Ovary (tissue), 10 donors: ENCODE measurements at regions of chr20 and their contacts with region 1.

Region 1: GRCh38 chr20:1212607-1213396 is 9.5 kb downstream of the C20orf202 start:
- DNase-seq: peak; percentile 39 to 63 (median 46)
- H3K4me3 ChIP-seq: no peak overlapping the region
- H3K27ac ChIP-seq: no peak overlapping the region
- H3K4me1 ChIP-seq: no peaks in the 10 kb centered on the region
- H3K27me3 ChIP-seq: no peaks in the 10 kb centered on the region
- CTCF ChIP-seq: peak; percentile 40 to 59 (median 49)
- EP300 ChIP-seq: no peak
- POLR2A ChIP-seq: no peak

Region 2: DNA sequence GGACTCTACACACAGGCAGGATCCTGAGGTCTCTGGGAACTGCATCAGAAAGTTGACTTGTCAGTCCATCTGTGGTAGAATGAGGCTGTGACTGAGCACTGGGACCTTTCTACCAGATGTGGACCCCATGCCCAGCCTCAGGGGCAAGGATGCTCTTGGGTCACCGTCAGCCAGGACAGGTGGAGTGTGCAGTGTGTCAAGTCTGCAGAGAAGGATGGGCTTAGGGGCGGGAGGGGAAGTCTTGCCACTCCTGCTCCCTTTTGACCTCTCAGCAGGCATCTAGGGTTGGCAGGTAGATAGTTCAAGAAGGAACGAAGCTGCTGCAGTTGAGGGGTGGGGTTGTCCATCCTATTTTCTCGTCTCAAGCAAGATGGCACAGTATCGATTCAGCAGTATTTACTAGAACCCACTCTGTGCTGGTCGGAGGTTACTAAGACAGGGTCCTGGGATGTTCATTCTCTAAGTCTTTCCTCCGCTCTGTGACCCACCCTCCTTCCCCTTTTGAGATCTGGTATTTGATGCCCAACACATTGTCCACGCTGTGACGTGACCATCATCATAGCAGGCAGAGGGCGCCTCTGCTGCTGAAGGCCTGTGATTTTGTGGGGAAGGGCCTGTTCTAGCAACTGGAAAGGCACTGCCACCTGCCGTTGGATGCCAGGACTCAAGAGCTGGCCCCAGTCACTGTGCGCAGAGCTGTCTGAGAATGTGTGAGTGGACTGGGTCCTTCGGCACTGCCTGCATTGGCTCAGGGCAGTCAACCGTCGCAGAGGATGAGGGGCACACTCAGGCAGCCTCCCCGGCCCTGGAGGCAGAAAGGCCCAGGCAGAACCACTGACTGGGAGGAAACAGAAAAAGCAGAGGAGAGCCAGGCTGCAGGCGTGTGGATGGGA is 781.5 kb before region 1 on chr20:
- intact Hi-C with region 1: no loop called
- DNase-seq: peak in 1 of 5 donors; percentile 55
- H3K4me3 ChIP-seq: no peak overlapping the region
- H3K27ac ChIP-seq: no peak overlapping the region
- H3K4me1 ChIP-seq: no peaks in the 10 kb centered on the region
- H3K27me3 ChIP-seq: no peaks in the 10 kb centered on the region
- CTCF ChIP-seq: no peak
- EP300 ChIP-seq: no peak
- POLR2A ChIP-seq: no peak

Region 3: GRCh38 chr20:815914-816606 is 396.7 kb before region 1 on chr20:
- intact Hi-C with region 1: loop called in 3 of 4 experiments (anchors 5 to 10 kb)
- DNase-seq: peak; percentile 29 to 70 (median 59)
- H3K4me3 ChIP-seq: no peak overlapping the region
- H3K27ac ChIP-seq: no peak overlapping the region
- H3K4me1 ChIP-seq: no peaks in the 10 kb centered on the region
- H3K27me3 ChIP-seq: no peaks in the 10 kb centered on the region
- CTCF ChIP-seq: peak; percentile 77 to 91 (median 85)
- EP300 ChIP-seq: no peak
- POLR2A ChIP-seq: no peak

Region 4: DNA sequence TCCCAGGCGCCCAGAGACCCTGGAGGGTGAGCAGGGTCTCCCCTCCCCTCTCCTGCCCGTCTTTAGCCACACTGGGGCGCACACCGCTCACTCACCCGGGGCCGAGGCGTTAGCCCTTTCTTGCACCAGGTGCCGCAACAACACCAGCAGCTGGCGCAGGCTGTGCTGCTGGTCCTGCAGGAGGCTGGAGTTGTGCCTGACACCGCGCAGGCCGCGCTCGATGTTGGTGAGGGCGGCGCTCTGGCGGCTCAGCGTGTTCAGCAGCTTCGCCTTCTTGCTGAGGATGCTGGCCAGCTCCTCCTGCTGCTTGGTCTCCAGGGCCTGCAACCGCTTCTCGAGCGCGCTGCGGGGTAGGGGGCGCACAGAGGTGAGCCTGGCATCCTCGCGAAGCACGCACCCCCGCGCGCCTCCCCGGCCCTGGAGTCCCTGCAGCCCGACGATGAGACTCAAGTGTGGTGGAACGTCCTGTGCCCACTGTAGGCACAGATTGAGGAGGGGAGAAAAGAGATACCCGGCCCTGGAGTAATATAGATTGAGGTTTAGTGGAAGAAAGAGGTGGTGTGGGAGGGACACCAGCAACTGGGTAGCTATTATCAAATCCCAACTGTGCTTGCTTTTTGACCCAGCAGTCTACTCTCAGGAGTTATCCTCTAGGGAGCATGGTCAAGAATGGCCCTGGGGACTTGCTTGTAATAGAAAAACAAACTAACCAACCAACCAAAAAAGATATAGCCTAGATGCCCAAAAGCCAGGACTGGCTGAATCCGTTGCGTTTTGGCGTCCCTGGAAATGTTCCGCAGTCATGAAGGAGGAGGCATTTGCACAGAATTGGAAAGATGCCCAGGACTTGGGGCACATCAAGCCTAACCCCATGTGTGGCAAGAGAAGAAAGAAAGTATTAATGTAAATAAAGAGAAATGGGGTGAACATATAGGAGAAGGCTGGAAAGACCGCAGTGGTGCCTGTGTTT is 327.5 kb before region 1 on chr20:
- intact Hi-C with region 1: loop called in 1 of 4 experiments (anchors 10 kb)
- DNase-seq: peak; percentile 60 to 90 (median 79)
- H3K4me3 ChIP-seq: no peak overlapping the region
- H3K27ac ChIP-seq: no peak overlapping the region
- H3K4me1 ChIP-seq: peaks cover 7% of the 10 kb centered on the region
- H3K27me3 ChIP-seq: no peaks in the 10 kb centered on the region
- CTCF ChIP-seq: peak in 2 of 3 donors; percentile 49 to 69
- EP300 ChIP-seq: no peak
- POLR2A ChIP-seq: no peak

Region 5: DNA sequence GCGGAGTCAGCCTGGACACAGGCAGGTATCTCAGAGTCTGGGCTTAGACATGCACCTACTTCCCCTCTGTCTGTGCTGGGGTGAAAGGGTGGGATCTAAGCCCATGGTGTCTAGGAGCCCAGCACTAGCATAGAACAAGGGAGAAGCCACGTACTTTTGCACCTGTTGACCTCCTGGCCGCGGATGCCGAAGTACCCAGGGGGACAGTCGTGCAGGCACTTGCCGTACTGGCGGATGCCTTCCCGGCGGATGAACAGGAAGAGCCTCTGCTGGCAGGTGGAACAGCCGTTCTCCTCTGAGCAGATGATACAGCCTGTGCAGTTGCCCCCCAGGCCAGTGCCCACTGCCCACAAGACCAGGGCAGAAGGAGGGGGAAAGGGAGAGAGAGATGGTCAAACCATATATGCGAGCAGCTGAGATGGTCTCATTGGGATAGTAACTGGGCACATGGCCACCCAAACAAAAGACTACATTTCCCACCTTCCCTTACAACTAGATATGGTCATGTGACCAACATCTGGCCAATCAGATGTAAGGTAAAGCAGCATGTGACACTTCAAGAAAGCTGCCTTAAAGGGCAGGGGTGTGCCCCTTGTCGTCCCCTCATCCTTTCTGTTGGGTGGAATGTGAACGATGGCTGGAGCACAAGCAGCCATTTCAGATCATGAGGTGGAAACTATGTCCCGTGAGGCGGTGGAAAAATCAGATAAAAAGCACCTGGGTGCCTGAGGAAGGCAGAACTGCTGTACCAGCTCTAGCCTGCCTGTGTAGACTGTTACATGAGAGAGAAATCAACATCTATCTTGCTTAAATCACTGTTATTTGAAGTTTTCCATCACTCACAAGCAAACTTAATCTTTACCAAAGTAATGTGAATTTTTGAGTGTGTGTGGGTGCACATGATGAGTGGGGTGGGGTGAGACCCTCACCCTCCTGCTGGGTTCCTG is 244.7 kb before region 1 on chr20:
- intact Hi-C with region 1: loop called in 1 of 4 experiments (anchors 10 kb)
- DNase-seq: no peak
- H3K4me3 ChIP-seq: no peak overlapping the region
- H3K27ac ChIP-seq: no peak overlapping the region
- H3K4me1 ChIP-seq: no peaks in the 10 kb centered on the region
- H3K27me3 ChIP-seq: no peaks in the 10 kb centered on the region
- CTCF ChIP-seq: no peak
- EP300 ChIP-seq: no peak
- POLR2A ChIP-seq: no peak

Region 6: GRCh38 chr20:1118336-1119127 is 94.3 kb before region 1 on chr20 and contains the start of gene PSMF1:
- intact Hi-C with region 1: loop called in 1 of 4 experiments (anchors 10 kb)
- DNase-seq: peak; percentile 87 to 95 (median 92)
- H3K4me3 ChIP-seq: peak within 1 kb of the TSS; percentile 90
- H3K27ac ChIP-seq: peak within 1 kb of the TSS; percentile 1 to 38
- H3K4me1 ChIP-seq: peaks cover 23% of the 10 kb centered on the region
- H3K27me3 ChIP-seq: no peaks in the 10 kb centered on the region
- CTCF ChIP-seq: peak in 1 of 3 donors; percentile 26
- EP300 ChIP-seq: no peak
- POLR2A ChIP-seq: no peak
- total RNA-seq, gene PSMF1: 33.4 to 163 (median 127) TPM

Region 7: DNA sequence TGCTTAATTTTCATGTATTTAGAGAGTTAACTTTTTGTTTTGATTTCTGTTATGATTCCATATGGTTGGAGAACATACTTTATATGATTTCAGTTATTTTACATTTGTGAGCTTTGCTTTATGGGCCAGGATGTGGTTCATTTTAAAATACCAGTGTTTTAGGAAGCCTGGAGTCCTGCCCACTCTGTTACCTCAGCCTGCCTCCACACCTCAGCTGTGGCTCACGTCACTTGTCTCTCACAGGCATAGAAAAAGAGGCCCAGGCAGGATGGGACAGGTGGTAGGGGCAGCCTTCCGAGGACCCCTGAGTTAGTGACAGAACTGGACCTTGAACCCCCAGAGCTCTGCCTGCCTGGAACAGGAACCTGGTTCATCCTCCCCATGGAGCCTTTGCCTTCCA is 78.4 kb before region 1 on chr20:
- intact Hi-C with region 1: no loop called
- DNase-seq: no peak
- H3K4me3 ChIP-seq: no peak overlapping the region
- H3K27ac ChIP-seq: no peak overlapping the region
- H3K4me1 ChIP-seq: no peaks in the 10 kb centered on the region
- H3K27me3 ChIP-seq: no peaks in the 10 kb centered on the region
- CTCF ChIP-seq: no peak
- EP300 ChIP-seq: no peak
- POLR2A ChIP-seq: no peak

Region 8: GRCh38 chr20:1336699-1337367 is 124.0 kb after region 1 on chr20:
- intact Hi-C with region 1: no loop called
- DNase-seq: peak; percentile 63 to 84 (median 72)
- H3K4me3 ChIP-seq: no peak overlapping the region
- H3K27ac ChIP-seq: no peak overlapping the region
- H3K4me1 ChIP-seq: peaks cover 2% of the 10 kb centered on the region
- H3K27me3 ChIP-seq: no peaks in the 10 kb centered on the region
- CTCF ChIP-seq: no peak
- EP300 ChIP-seq: no peak
- POLR2A ChIP-seq: no peak

Region 9: DNA sequence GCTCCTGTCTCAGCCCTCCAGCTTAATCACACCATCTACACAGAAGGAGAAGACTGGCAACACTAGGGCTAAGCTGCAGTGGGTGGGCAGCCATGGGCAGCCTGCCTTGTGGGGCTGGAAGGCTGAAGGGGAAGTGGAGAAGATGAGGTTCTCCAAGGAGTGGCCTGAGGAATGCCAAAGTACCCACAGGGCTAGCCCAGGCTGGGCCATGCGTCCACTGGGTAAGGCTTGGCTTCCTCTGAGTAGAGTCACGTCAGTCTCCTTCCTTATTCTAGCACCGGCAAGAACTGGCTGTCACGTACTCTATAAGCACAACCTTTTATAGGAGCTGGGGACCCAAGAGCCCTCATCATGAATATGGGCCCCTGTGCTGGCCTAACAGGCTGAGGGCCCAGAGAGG is 571.8 kb after region 1 on chr20:
- intact Hi-C with region 1: no loop called
- DNase-seq: no peak
- H3K4me3 ChIP-seq: no peak overlapping the region
- H3K27ac ChIP-seq: no peak overlapping the region
- H3K4me1 ChIP-seq: no peaks in the 10 kb centered on the region
- H3K27me3 ChIP-seq: no peaks in the 10 kb centered on the region
- CTCF ChIP-seq: no peak
- EP300 ChIP-seq: no peak
- POLR2A ChIP-seq: no peak